HCT116 (cell line): ENCODE measurements at regions of chrX and their contacts with region 1.

Region 1: GRCh38 chrX:108070891-108071290 is 20.5 kb downstream of the PSMD10 start:
- DNase-seq: no peak
- ATAC-seq: peak; percentile 47; the same call in 1 of the 2 replicates
- H3K4me3 ChIP-seq: no peak overlapping the region
- H3K27ac ChIP-seq: no peak overlapping the region
- H3K4me1 ChIP-seq: peaks cover 0 to 6% of the 10 kb centered on the region in 2 experiments; a peak in 1 of 4 replicates
- H3K27me3 ChIP-seq: no peaks in the 10 kb centered on the region
- CTCF ChIP-seq: no peak
- POLR2A ChIP-seq: no peak
- RAD21 ChIP-seq: no peak

Region 2: GRCh38 chrX:107025545-107025944 is 1045.3 kb before region 1 on chrX:
- CTCF ChIA-PET with region 1: no interaction called
- POLR2A ChIA-PET with region 1: no interaction called
- RAD21 ChIA-PET with region 1: no interaction called
- intact Hi-C with region 1: loop called (anchors 10 kb)
- DNase-seq: peak; percentile 27
- ATAC-seq: peak; percentile 81
- H3K4me3 ChIP-seq: no peak overlapping the region
- H3K27ac ChIP-seq: no peak overlapping the region
- H3K4me1 ChIP-seq: no peaks in the 10 kb centered on the region
- H3K27me3 ChIP-seq: no peaks in the 10 kb centered on the region
- CTCF ChIP-seq: peak; percentile 54 to 69 (median 63); a peak in 5 of 6 replicates
- POLR2A ChIP-seq: no peak
- RAD21 ChIP-seq: peak; percentile 83

Region 3: GRCh38 chrX:107135049-107135964 is 935.6 kb before region 1 on chrX:
- CTCF ChIA-PET with region 1: no interaction called
- POLR2A ChIA-PET with region 1: no interaction called
- RAD21 ChIA-PET with region 1: no interaction called
- intact Hi-C with region 1: no loop called
- DNase-seq: peak; percentile 78
- ATAC-seq: peak; percentile 91
- H3K4me3 ChIP-seq: peak overlapping the region; percentile 13 to 47
- H3K27ac ChIP-seq: peak overlapping the region; percentile 90
- H3K4me1 ChIP-seq: peaks cover 21 to 37% of the 10 kb centered on the region in 2 experiments
- H3K27me3 ChIP-seq: no peaks in the 10 kb centered on the region
- CTCF ChIP-seq: no peak
- POLR2A ChIP-seq: no peak
- RAD21 ChIP-seq: no peak

Region 4: GRCh38 chrX:107894038-107894437 is 176.9 kb before region 1 on chrX:
- CTCF ChIA-PET with region 1: no interaction called
- POLR2A ChIA-PET with region 1: no interaction called
- RAD21 ChIA-PET with region 1: no interaction called
- intact Hi-C with region 1: loop called (anchors 10 kb)
- DNase-seq: peak; percentile 51
- ATAC-seq: peak; percentile 83
- H3K4me3 ChIP-seq: no peak overlapping the region
- H3K27ac ChIP-seq: no peak overlapping the region
- H3K4me1 ChIP-seq: no peaks in the 10 kb centered on the region
- H3K27me3 ChIP-seq: no peaks in the 10 kb centered on the region
- CTCF ChIP-seq: peak; percentile 25 to 54 (median 50); a peak in 5 of 6 replicates
- POLR2A ChIP-seq: no peak
- RAD21 ChIP-seq: peak; percentile 74

Region 5: DNA sequence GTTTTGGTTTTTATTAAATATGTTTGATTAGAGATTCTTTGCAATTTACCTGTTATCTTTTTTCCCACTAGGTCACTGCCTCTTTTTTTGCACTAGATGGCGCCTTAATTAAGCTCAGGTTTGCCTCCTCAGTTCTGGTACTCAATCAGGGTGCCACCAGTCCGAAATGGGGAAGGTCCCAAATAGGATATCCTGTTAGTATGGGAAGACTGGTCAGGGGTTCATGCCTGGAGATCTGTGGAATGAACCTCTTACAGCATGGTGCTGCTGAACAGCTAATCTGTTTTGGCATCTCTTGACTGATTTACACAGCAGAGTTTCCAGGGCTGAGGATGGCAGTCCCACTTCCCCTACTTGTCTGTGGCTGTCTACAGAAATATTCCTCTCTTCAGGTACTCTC is 50.3 kb before region 1 on chrX:
- CTCF ChIA-PET with region 1: interaction called, 4 read pairs
- POLR2A ChIA-PET with region 1: no interaction called
- RAD21 ChIA-PET with region 1: no interaction called
- intact Hi-C with region 1: loop called (anchors 1 kb)
- DNase-seq: peak; percentile 4
- ATAC-seq: peak; percentile 58; the same call in 1 of the 2 replicates
- H3K4me3 ChIP-seq: no peak overlapping the region
- H3K27ac ChIP-seq: no peak overlapping the region
- H3K4me1 ChIP-seq: no peaks in the 10 kb centered on the region
- H3K27me3 ChIP-seq: no peaks in the 10 kb centered on the region
- CTCF ChIP-seq: peak; percentile 48 to 56 (median 54); a peak in 5 of 6 replicates
- POLR2A ChIP-seq: no peak
- RAD21 ChIP-seq: peak; percentile 61

Region 6: GRCh38 chrX:108285356-108285755 is 214.5 kb after region 1 on chrX:
- CTCF ChIA-PET with region 1: no interaction called
- POLR2A ChIA-PET with region 1: no interaction called
- RAD21 ChIA-PET with region 1: no interaction called
- intact Hi-C with region 1: no loop called
- DNase-seq: no peak
- ATAC-seq: no peak
- H3K4me3 ChIP-seq: no peak overlapping the region
- H3K27ac ChIP-seq: no peak overlapping the region
- H3K4me1 ChIP-seq: no peaks in the 10 kb centered on the region
- H3K27me3 ChIP-seq: no peaks in the 10 kb centered on the region
- CTCF ChIP-seq: no peak
- POLR2A ChIP-seq: no peak
- RAD21 ChIP-seq: no peak